ENCODE measurements at regions of chr3 and their contacts with region 1.

Region 1: DNA sequence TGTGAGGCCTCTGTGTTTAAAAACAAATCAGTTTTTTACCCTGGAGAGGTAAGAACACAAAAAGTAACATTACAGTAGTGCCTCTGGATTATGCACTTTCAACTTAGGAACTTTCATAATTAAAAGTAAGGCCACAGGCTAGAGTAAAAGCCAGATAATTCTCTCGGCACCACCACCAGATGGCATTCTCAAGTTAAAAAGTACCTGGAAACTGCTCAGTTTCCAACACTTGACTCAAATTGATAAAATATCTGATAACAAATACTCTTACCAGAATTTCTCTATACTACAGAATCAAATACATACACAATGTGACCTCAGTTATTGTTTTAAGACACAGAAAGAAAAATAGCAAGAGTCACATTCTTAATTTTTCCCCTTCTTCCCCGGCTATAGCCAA is 19.9 kb downstream of the SPICE1 start:
- DNase-seq: peak; percentile 18 to 56 (median 42)
- ATAC-seq: peak; percentile 56
- H3K4me3 ChIP-seq: no peak overlapping the region
- H3K27ac ChIP-seq: no peak overlapping the region
- H3K4me1 ChIP-seq: no peaks in the 10 kb centered on the region
- H3K27me3 ChIP-seq: no peaks in the 10 kb centered on the region
- CTCF ChIP-seq: peak; percentile 7 to 58 (median 45)
- POLR2A ChIP-seq: no peak

Region 2: GRCh38 chr3:113626503-113627371 is 131.7 kb after region 1 on chr3:
- intact Hi-C with region 1: loop called (anchors 10 kb)
- DNase-seq: peak; percentile 50 to 70 (median 62)
- ATAC-seq: peak; percentile 81
- H3K4me3 ChIP-seq: no peak overlapping the region
- H3K27ac ChIP-seq: no peak overlapping the region
- H3K4me1 ChIP-seq: peaks cover 6% of the 10 kb centered on the region
- H3K27me3 ChIP-seq: no peaks in the 10 kb centered on the region
- CTCF ChIP-seq: peak; percentile 70 to 91 (median 88)
- POLR2A ChIP-seq: no peak

Region 3: GRCh38 chr3:114112696-114113095 is 617.7 kb after region 1 on chr3:
- intact Hi-C with region 1: no loop called
- DNase-seq: no peak
- ATAC-seq: no peak
- H3K4me3 ChIP-seq: no peak overlapping the region
- H3K27ac ChIP-seq: no peak overlapping the region
- H3K4me1 ChIP-seq: no peaks in the 10 kb centered on the region
- H3K27me3 ChIP-seq: no peaks in the 10 kb centered on the region
- CTCF ChIP-seq: no peak
- POLR2A ChIP-seq: no peak